Dorsolateral prefrontal cortex (tissue), 120 donors: ENCODE measurements at regions of chr5 and their contacts with region 1.

Region 1: GRCh38 chr5:155943516-155944407 is 383.2 kb upstream of the SGCD start:
- DNase-seq: peak; percentile 17 to 71 (median 58)
- H3K4me3 ChIP-seq: no peak overlapping the region
- H3K27ac ChIP-seq: no peak overlapping the region
- H3K27me3 ChIP-seq: no peaks in the 10 kb centered on the region
- CTCF ChIP-seq: peak; percentile 47 to 96 (median 82)

Region 2: DNA sequence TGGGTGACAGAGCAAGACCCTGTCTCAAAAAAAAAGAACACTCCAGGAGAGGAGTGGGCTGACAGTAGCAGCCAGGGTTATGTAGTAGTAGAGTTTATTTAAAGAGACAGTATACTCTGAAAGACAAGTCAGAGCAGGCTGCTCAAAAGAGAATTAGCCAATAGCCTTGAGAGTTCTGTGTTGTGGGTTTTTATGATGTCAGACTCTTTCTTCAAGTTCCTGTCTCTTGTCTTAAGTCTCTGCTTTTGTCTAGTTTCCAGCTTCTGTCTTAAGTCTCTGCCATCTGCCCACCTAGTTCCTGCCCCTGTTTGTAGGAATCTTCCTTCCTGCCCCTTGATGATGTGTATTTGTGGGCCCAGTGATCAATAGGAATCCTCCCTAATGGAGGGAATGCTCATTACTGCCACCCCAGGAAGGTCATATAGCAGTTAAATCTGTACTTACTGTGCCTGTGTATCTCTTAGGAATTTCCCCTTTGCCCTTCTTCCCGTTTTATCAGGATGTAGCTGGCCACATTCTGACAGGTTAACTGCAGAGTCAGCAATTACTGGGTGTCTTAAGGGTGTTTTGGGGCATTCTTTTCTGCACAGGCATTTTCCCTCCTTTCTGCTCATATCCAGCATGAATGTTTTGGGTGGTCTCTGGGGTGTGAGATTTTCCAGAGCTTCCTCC is 197.3 kb before region 1 on chr5:
- intact Hi-C with region 1: no loop called
- DNase-seq: no peak
- H3K4me3 ChIP-seq: no peak overlapping the region
- H3K27ac ChIP-seq: no peak overlapping the region
- H3K27me3 ChIP-seq: no peaks in the 10 kb centered on the region
- CTCF ChIP-seq: no peak

Region 3: GRCh38 chr5:155884041-155884440 is 59.7 kb before region 1 on chr5:
- intact Hi-C with region 1: no loop called
- DNase-seq: no peak
- H3K4me3 ChIP-seq: no peak overlapping the region
- H3K27ac ChIP-seq: no peak overlapping the region
- H3K27me3 ChIP-seq: peaks cover 0 to 3% (median 0%) of the 10 kb centered on the region in 45 donors
- CTCF ChIP-seq: no peak

Region 4: GRCh38 chr5:156815988-156816599 is 872.3 kb after region 1 on chr5:
- intact Hi-C with region 1: loop called (anchors 5 kb)
- DNase-seq: no peak
- H3K4me3 ChIP-seq: no peak overlapping the region
- H3K27ac ChIP-seq: no peak overlapping the region
- H3K27me3 ChIP-seq: no peaks in the 10 kb centered on the region
- CTCF ChIP-seq: peak in 55 of 56 donors; percentile 37 to 78 (median 55)

Region 5: DNA sequence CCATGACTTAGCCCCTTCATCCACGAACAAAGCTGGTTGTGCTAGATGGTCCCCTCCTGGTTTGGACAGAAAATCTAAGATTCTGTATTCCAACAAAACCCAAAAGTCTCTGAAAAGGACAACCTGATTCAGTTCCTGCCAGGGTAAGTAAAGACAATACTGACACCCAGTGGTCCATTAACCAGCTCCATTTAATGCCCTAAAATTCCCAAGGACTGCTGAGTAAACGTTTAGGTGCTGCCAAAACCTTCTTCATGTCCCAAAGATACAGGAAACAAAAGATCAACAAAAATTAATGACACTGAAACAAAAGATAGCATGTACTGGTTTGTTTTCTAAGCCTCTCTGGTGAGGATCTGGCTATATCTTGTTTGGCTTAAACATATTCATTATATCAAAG is 881.0 kb after region 1 on chr5:
- intact Hi-C with region 1: loop called (anchors 5 kb)
- DNase-seq: peak in 1 of 10 donors; percentile 19
- H3K4me3 ChIP-seq: no peak overlapping the region
- H3K27ac ChIP-seq: no peak overlapping the region
- H3K27me3 ChIP-seq: no peaks in the 10 kb centered on the region
- CTCF ChIP-seq: peak in 54 of 56 donors; percentile 40 to 82 (median 62)

Region 6: GRCh38 chr5:156934450-156935211 is 990.9 kb after region 1 on chr5:
- intact Hi-C with region 1: loop called in 1 of 2 experiments (anchors 10 kb)
- DNase-seq: peak in 5 of 10 donors; percentile 24 to 59 (median 37)
- H3K4me3 ChIP-seq: peak overlapping the region in 8 of 59 donors; percentile 2 to 47 (median 23)
- H3K27ac ChIP-seq: no peak overlapping the region
- H3K27me3 ChIP-seq: no peaks in the 10 kb centered on the region
- CTCF ChIP-seq: peak; percentile 28 to 76 (median 62)